ENCODE measurements at regions of chr2 and their contacts with region 1.

Region 1: GRCh38 chr2:143034292-143035074 is 94.7 kb upstream of the ARHGAP15 start:
- DNase-seq: peak; percentile 57
- H3K4me3 ChIP-seq: no peak overlapping the region
- H3K27ac ChIP-seq: no peak overlapping the region
- H3K27me3 ChIP-seq: no peaks in the 10 kb centered on the region
- CTCF ChIP-seq: peak; percentile 96

Region 2: GRCh38 chr2:143051465-143051864 is 17.0 kb after region 1 on chr2:
- CTCF ChIA-PET with region 1: interaction called, 19 read pairs
- POLR2A ChIA-PET with region 1: no interaction called
- DNase-seq: no peak
- H3K4me3 ChIP-seq: no peak overlapping the region
- H3K27ac ChIP-seq: no peak overlapping the region
- H3K27me3 ChIP-seq: no peaks in the 10 kb centered on the region
- CTCF ChIP-seq: no peak

Region 3: GRCh38 chr2:143083636-143084035 is 49.2 kb after region 1 on chr2:
- CTCF ChIA-PET with region 1: interaction called, 12 read pairs
- POLR2A ChIA-PET with region 1: no interaction called
- DNase-seq: peak; percentile 64
- H3K4me3 ChIP-seq: peak overlapping the region; percentile 15; the same call in 1 of the 2 replicates
- H3K27ac ChIP-seq: no peak overlapping the region
- H3K27me3 ChIP-seq: no peaks in the 10 kb centered on the region
- CTCF ChIP-seq: no peak

Region 4: DNA sequence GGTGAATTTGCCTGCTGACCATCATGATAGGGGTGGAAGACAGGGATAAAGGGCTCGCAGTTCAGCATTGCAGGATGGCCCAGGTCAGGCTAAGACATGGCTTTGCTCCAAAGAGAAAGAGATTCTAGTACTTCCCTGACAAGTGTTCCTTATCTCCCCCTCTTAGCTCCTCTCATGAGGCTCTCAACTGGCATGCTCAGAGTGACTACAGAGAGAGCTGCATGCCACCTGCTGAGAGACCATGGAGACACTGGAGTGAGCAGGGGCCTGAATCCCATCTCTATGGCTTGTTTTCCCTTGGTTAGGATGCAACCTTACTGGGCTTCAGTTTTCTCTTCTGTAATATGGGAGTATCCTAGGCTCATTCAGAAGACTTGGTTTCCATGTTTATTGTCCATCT is 189.1 kb after region 1 on chr2:
- CTCF ChIA-PET with region 1: interaction called, 43 read pairs
- POLR2A ChIA-PET with region 1: no interaction called
- DNase-seq: no peak
- H3K4me3 ChIP-seq: no peak overlapping the region
- H3K27ac ChIP-seq: no peak overlapping the region
- H3K27me3 ChIP-seq: no peaks in the 10 kb centered on the region
- CTCF ChIP-seq: no peak